Activated B cell treated with CpG ODN at 0.5 μM for 24 hours (primary cell): ENCODE measurements at regions of chr11 and their contacts with region 1.

Region 1: DNA sequence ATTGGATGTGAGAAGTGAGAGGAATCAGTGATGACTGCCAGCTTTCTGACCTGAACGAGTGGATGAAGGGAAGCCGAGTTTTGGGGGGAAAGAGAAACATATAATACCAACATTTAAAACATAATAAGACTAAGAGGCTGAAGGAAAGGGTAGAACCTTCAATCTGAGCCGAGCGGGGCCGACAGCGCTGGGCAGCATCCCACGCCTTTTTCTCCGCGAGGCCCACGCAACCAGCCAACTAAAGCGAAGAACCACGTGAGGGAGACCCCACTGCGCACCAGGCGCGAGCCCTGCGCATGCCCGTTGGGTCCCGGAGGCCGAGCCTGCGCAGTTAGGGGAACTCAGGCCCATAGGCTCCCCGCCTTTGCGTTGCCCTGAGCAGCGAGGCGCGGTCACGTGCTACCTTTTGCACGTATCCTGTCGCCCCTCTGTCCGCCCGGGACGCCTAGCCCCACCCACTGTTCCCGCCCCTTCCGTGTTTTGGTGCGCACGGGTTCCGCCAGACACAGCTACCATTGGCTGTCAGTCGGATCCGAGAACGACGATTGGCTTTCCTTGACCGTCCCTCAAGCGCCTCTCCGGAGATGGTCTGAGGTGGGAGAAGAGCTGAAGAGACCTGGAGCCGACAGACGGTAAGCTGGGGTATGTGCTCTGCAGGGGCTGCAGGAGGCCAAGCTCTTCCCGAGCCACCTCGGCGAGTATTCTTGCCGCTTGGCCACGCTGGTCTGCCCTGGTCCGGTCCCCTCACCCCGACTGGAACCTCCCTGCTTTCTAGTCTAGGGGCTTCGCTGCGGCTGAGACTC is at the start of gene HINFP:
- DNase-seq: peak; percentile 97
- ATAC-seq: peak; percentile 97
- H3K4me3 Mint-ChIP-seq: peak within 1 kb of the TSS; percentile 94
- H3K27ac Mint-ChIP-seq: peak within 1 kb of the TSS; percentile 92
- H3K4me1 Mint-ChIP-seq: peaks cover 30% of the 10 kb centered on the region
- H3K27me3 Mint-ChIP-seq: no peaks in the 10 kb centered on the region
- CTCF ChIP-seq: no peak
- total RNA-seq, gene HINFP: 47.8 and 62.6 TPM in 2 replicates

Region 2: DNA sequence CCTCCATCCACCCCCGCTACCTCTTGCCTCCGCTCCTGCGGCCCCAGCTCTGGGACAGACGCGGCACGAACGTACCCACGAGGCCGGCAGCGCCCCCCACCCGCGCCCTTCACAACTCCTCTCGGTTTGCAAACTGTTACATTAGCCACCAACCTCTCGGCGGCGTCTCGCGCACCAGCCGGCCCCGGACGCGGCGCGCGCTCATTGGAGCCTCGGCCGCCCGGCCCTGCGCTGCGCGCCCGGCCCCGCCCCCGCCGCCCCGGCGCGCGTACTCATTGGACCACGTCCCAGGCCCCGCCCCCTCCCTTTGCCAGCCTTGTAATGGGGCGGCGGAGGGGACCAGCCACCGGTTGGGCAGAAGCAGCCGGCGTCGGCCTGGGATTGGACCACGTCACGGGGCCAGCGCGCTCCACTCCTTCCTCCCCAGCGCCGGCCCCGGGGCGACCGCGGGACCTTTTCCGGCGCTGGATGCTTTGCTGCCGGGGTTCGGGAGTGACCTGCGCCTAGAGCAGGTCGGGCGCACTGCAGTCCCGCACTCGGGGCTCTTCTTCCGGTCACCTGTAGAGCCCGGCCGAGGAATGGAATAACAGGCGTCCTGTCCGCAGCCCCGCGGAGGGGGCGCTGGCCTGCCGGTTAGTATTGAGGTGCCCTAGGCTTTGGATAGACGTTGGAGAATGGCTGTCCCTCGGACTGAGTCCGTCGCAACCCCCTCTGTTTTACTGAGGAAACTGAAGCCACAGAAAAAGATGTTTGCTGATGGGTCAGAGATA is 64.0 kb before region 1 on chr11 and contains the start of gene HYOU1:
- CTCF ChIA-PET with region 1: no interaction called
- POLR2A ChIA-PET with region 1: interaction called, 3 read pairs
- intact Hi-C with region 1: loop called (anchors 1 kb)
- DNase-seq: peak; percentile 97
- ATAC-seq: peak; percentile 94
- H3K4me3 Mint-ChIP-seq: peak within 1 kb of the TSS; percentile 96
- H3K27ac Mint-ChIP-seq: peak within 1 kb of the TSS; percentile 95
- H3K4me1 Mint-ChIP-seq: peaks cover 40% of the 10 kb centered on the region
- H3K27me3 Mint-ChIP-seq: no peaks in the 10 kb centered on the region
- CTCF ChIP-seq: no peak
- total RNA-seq, gene HYOU1: 120 and 122 TPM in 2 replicates

Region 3: GRCh38 chr11:119084663-119085436 is 36.4 kb before region 1 on chr11 and contains the start of gene HMBS:
- CTCF ChIA-PET with region 1: no interaction called
- POLR2A ChIA-PET with region 1: interaction called, 10 read pairs
- intact Hi-C with region 1: no loop called
- DNase-seq: peak; percentile 92
- ATAC-seq: peak; percentile 90
- H3K4me3 Mint-ChIP-seq: peak within 1 kb of the TSS; percentile 95
- H3K27ac Mint-ChIP-seq: peak within 1 kb of the TSS; percentile 93
- H3K4me1 Mint-ChIP-seq: peaks cover 12% of the 10 kb centered on the region
- H3K27me3 Mint-ChIP-seq: no peaks in the 10 kb centered on the region
- CTCF ChIP-seq: no peak
- total RNA-seq, gene HMBS: 17.5 and 26.9 TPM in 2 replicates

Region 4: GRCh38 chr11:119101759-119102423 is 19.3 kb before region 1 on chr11 and contains the start of gene DPAGT1:
- CTCF ChIA-PET with region 1: interaction called, 4 read pairs
- POLR2A ChIA-PET with region 1: interaction called, 20 read pairs
- intact Hi-C with region 1: loop called (anchors 1 kb)
- DNase-seq: peak; percentile 64
- ATAC-seq: peak; percentile 87
- H3K4me3 Mint-ChIP-seq: peak within 1 kb of the TSS; percentile 96
- H3K27ac Mint-ChIP-seq: peak within 1 kb of the TSS; percentile 96
- H3K4me1 Mint-ChIP-seq: peaks cover 58% of the 10 kb centered on the region
- H3K27me3 Mint-ChIP-seq: no peaks in the 10 kb centered on the region
- CTCF ChIP-seq: no peak
- total RNA-seq, gene DPAGT1: 31.0 and 33.1 TPM in 2 replicates

Region 5: GRCh38 chr11:119108146-119108856 is 12.9 kb before region 1 on chr11:
- CTCF ChIA-PET with region 1: interaction called, 4 read pairs
- POLR2A ChIA-PET with region 1: interaction called, 20 read pairs
- intact Hi-C with region 1: loop called (anchors 1 kb)
- DNase-seq: no peak
- ATAC-seq: no peak
- H3K4me3 Mint-ChIP-seq: peak overlapping the region; percentile 82
- H3K27ac Mint-ChIP-seq: peak overlapping the region; percentile 21
- H3K4me1 Mint-ChIP-seq: peaks cover 29% of the 10 kb centered on the region
- H3K27me3 Mint-ChIP-seq: no peaks in the 10 kb centered on the region
- CTCF ChIP-seq: no peak

Region 6: GRCh38 chr11:119168471-119169281 is 47.5 kb after region 1 on chr11 and contains the start of gene NLRX1:
- CTCF ChIA-PET with region 1: interaction called, 3 read pairs
- POLR2A ChIA-PET with region 1: interaction called, 11 read pairs
- intact Hi-C with region 1: loop called (anchors 1 kb)
- DNase-seq: peak; percentile 74
- ATAC-seq: peak; percentile 97
- H3K4me3 Mint-ChIP-seq: peak within 1 kb of the TSS; percentile 86
- H3K27ac Mint-ChIP-seq: peak within 1 kb of the TSS; percentile 50
- H3K4me1 Mint-ChIP-seq: peaks cover 5% of the 10 kb centered on the region
- H3K27me3 Mint-ChIP-seq: no peaks in the 10 kb centered on the region
- CTCF ChIP-seq: peak; percentile 69
- total RNA-seq, gene NLRX1: 9.8 TPM in 2 replicates

Region 7: DNA sequence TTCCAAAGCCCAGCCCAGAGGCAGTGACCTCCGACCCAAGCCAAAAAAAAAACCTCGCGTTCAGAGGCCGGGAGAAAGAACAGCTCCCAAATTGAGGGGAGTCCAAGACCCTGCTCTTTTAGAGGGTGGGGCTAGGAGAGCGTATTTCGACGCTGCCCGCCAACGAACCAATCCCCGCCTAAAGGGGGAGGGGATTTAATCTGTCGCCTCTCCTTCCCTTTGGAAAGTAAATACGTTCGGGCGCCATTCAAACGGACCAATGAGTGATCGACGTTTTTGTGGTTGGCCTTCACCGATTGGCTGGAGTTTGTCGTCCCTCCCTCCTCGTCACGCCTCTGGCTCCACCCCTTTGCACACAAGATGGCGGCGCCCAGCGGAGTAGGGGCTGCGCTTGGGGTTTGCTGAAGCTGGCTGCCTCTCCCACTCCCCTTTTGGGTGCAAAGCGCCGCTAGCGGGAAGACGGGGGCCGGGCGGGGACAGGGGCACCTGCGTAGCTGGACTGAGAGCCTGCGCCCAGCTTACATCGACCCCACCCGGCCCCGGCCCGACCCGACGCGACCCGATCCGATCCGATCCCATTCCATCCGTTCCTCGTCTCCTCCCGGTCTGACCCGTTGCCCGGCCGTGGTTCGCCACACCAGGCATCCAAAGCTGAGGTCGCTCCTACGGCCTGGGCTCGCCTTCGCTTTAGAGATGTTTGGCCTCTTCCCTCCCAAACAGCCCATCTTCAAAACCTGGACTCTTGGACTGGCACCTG is 213.1 kb after region 1 on chr11 and contains the start of gene RNF26:
- CTCF ChIA-PET with region 1: no interaction called
- POLR2A ChIA-PET with region 1: no interaction called
- intact Hi-C with region 1: loop called (anchors 1 kb)
- DNase-seq: peak; percentile 87
- ATAC-seq: peak; percentile 97
- H3K4me3 Mint-ChIP-seq: peak within 1 kb of the TSS; percentile 99
- H3K27ac Mint-ChIP-seq: peak within 1 kb of the TSS; percentile 93
- H3K4me1 Mint-ChIP-seq: peaks cover 31% of the 10 kb centered on the region
- H3K27me3 Mint-ChIP-seq: peaks cover 9% of the 10 kb centered on the region
- CTCF ChIP-seq: no peak
- total RNA-seq, gene RNF26: 20.1 and 21.2 TPM in 2 replicates

Region 8: GRCh38 chr11:119567688-119568582 is 446.7 kb after region 1 on chr11:
- CTCF ChIA-PET with region 1: no interaction called
- POLR2A ChIA-PET with region 1: no interaction called
- intact Hi-C with region 1: no loop called
- DNase-seq: no peak
- ATAC-seq: peak; percentile 60
- H3K4me3 Mint-ChIP-seq: no peak overlapping the region
- H3K27ac Mint-ChIP-seq: no peak overlapping the region
- H3K4me1 Mint-ChIP-seq: no peaks in the 10 kb centered on the region
- H3K27me3 Mint-ChIP-seq: peaks cover 5% of the 10 kb centered on the region
- CTCF ChIP-seq: no peak